SK-N-SH (cell line): ENCODE measurements at regions of chr5 and their contacts with region 1.

Region 1: DNA sequence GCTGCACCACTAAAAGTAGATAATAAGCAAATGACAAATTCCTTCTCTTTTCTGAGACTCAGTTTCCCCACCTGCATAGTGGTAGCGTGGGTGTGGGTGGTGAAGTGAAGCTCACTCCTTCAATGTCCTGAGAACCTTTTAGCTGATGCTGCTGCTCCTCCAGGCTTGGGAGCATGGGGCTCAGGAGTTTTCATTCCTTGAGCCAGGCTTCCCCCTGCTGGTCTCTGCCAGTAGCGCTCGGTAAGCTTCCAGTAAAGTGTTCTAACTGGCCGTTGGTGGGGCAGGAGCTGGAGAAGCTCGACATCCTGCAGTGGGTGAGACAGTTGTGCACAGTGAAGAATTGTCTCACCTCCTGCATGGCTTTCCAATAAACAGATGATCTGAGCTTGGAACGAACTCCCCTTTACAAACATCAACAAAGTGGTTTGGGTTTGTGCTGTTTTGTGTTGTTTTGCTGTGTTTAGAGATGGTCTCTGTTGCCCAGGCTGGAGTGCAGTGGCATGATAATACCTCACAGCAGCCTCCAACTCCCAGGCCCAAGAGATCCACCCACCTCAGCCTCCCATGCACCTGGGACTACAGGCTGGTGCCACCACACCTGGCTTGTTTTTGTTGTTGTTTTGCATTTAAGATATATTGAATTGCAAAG is 34.6 kb downstream of the SPARC start:
- DNase-seq: peak; percentile 82
- H3K4me3 ChIP-seq: peak overlapping the region in 1 of 2 experiments; percentile 1; a peak in 1 of 4 replicates
- H3K27ac ChIP-seq: no peak overlapping the region
- H3K4me1 ChIP-seq: no peaks in the 10 kb centered on the region
- H3K27me3 ChIP-seq: peaks cover under 1% of the 10 kb centered on the region; the same call in 1 of the 2 replicates
- CTCF ChIP-seq: peak; percentile 80
- EP300 ChIP-seq: no peak
- RAD21 ChIP-seq: peak; percentile 96

Region 2: DNA sequence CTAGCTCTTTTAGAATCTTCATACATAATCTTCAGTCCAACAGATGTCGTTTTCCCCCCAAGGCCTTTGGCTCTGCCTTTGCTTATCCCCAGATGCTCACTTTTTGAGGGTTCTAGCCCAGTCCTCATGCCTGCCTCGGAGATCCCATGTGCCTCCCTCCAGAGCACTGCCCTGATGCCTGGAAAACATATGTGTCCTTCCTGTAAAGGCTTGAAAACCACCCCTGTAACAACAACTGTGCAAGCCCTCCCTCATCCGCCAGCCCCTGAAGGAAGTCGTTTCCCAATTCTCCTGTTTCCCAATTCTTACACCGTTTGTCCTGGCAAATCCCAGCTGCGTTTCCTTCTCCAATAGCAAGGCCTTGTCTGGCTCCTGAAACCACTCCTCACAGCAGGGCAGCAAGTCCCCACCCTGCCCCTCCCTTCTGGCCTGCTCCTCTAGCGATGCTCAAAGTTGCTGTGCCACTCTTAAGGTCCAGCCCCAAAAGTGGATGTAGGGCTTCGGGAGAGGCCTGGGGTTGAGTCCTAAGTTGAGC is 152.6 kb before region 1 on chr5:
- CTCF ChIA-PET with region 1: interaction called, 21 read pairs
- POLR2A ChIA-PET with region 1: no interaction called
- DNase-seq: peak; percentile 27
- H3K4me3 ChIP-seq: no peak overlapping the region
- H3K27ac ChIP-seq: no peak overlapping the region
- H3K4me1 ChIP-seq: peaks cover 0 to 11% of the 10 kb centered on the region in 2 experiments; a peak in 2 of 4 replicates
- H3K27me3 ChIP-seq: no peaks in the 10 kb centered on the region
- CTCF ChIP-seq: no peak
- EP300 ChIP-seq: no peak
- RAD21 ChIP-seq: no peak

Region 3: GRCh38 chr5:151632524-151632923 is 19.6 kb before region 1 on chr5:
- CTCF ChIA-PET with region 1: interaction called, 12 read pairs
- POLR2A ChIA-PET with region 1: no interaction called
- DNase-seq: no peak
- H3K4me3 ChIP-seq: no peak overlapping the region
- H3K27ac ChIP-seq: no peak overlapping the region
- H3K4me1 ChIP-seq: no peaks in the 10 kb centered on the region
- H3K27me3 ChIP-seq: peaks cover 19% of the 10 kb centered on the region; the same call in 1 of the 2 replicates
- CTCF ChIP-seq: no peak
- EP300 ChIP-seq: no peak
- RAD21 ChIP-seq: no peak

Region 4: DNA sequence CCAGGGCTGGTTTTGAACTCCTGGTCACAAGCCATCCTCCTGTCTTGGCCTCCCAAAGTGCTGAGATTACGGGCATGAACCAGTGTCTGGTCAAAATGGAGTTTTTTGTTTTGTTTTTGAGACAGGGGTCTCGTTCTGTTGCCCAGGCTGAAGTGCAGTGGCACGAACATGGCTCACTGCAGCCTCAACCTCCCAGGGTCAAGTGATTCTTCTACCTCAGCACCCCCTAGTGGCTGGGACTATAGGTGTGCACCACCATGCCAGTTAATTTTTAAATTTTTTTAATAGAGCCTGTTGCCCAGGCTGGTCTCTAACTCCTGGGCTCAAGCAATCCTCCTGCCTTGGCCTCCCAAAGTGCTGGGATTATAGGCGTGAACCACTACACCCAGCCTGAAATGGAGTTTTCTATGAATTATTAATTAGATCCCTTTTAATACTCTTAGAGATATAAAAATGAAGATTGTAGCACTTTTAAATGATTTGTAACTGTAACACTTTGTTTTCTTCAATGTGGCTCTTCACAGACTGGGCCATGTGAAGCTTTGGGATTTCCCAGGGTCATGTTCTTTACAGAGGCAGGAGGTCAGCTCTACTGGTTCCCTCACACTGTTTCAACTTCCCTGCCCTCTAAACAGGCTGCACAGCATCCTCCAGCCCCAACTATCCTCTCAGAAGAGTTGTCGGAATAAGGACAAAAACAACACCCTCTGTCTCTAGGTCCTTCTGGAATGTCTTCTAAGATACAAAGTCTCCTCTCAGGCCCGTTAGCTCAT is 67.3 kb after region 1 on chr5:
- CTCF ChIA-PET with region 1: interaction called, 35 read pairs
- POLR2A ChIA-PET with region 1: no interaction called
- DNase-seq: no peak
- H3K4me3 ChIP-seq: no peak overlapping the region
- H3K27ac ChIP-seq: peak overlapping the region in 1 of 2 experiments; percentile 60; a peak in 2 of 4 replicates
- H3K4me1 ChIP-seq: peaks cover 0 to 8% of the 10 kb centered on the region in 2 experiments; a peak in 1 of 4 replicates
- H3K27me3 ChIP-seq: no peaks in the 10 kb centered on the region
- CTCF ChIP-seq: peak; percentile 64
- EP300 ChIP-seq: no peak
- RAD21 ChIP-seq: peak; percentile 64